CD8-positive, alpha-beta T cell (primary cell): ENCODE measurements at regions of chr22 and their contacts with region 1.

Region 1: DNA sequence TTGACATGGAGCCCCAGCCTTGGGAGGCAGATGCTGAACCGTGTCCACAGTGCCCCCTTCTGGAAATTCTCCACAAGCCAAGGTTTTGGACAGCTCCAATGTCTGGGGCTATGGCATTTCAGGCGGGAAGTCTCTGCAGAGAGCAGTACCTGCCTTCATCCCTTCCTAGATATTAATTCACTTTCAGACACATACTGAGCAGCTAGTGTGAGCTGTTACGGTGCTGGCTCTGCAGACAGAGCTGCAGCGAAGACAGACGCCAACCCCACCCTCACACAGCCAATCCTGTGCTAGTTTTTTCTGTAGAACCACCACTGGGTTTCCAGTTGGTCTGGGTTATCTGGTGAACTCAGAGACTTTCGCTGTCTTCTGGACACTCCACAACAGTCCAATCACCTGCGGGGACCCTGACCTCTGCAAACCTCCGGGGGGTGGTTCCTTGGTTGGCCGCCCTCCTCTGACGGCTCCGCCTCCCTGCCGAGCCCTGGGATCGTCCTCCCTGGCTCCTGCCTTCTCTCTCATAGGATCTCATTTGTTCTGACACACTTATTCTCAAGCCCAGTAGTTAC is 9.1 kb downstream of the LMF2 start:
- DNase-seq: peak; percentile 41 to 84 (median 76)
- ATAC-seq: peak; percentile 99
- H3K4me3 ChIP-seq: no peak overlapping the region
- H3K4me3 Mint-ChIP-seq: no peak overlapping the region
- H3K27ac ChIP-seq: no peak overlapping the region
- H3K27ac Mint-ChIP-seq: no peak overlapping the region
- H3K4me1 ChIP-seq: no peaks in the 10 kb centered on the region
- H3K4me1 Mint-ChIP-seq: no peaks in the 10 kb centered on the region
- H3K27me3 ChIP-seq: no peaks in the 10 kb centered on the region
- H3K27me3 Mint-ChIP-seq: no peaks in the 10 kb centered on the region
- CTCF ChIP-seq: peak; percentile 63

Region 2: DNA sequence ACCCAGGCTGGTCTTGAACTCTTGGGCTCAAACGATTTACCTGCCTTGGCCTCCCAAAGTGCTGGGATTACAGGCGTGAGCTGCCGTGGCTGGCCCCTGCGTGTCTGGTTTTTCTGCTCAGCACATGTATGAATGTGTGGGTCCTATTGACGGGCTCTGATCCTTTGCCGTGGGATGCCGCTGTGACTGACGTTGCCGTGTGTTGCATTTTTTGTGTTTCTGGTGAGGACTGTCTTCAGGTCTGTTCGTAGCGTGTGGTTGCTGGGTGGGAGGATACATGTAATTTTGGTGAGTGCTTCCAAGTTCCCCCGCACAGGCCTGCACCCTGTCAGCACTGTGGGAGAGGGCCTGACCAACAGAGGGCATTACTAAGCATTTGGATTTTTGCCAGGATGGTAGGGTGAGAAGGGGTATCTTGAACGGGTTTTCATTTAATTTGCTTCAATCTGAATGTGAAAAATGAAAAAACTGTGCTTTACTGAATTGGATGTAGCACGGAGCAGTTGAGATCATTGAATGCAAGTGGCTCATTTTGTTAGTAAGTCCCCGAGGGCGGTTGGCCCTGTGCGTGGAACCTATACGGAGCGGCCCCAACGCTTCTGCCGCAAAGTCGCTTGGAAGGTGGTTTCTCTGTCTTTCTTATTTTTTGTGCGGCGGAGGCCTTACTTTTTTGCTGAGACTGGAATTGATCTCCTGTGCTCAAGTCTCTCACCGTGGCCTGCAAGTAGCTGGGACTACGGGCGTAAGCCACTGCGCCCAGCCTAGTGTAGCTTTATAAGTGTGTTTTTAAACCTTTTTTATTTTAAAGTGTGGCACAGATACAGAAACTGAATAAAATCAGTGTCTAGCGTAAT is 636.5 kb before region 1 on chr22:
- CTCF ChIA-PET with region 1: no interaction called
- POLR2A ChIA-PET with region 1: no interaction called
- intact Hi-C with region 1: no loop called
- DNase-seq: no peak
- ATAC-seq: no peak
- H3K4me3 ChIP-seq: no peak overlapping the region
- H3K4me3 Mint-ChIP-seq: no peak overlapping the region
- H3K27ac ChIP-seq: no peak overlapping the region
- H3K27ac Mint-ChIP-seq: peak overlapping the region; percentile 45
- H3K4me1 ChIP-seq: peaks cover 21% of the 10 kb centered on the region
- H3K4me1 Mint-ChIP-seq: peaks cover 53% of the 10 kb centered on the region
- H3K27me3 ChIP-seq: no peaks in the 10 kb centered on the region
- H3K27me3 Mint-ChIP-seq: no peaks in the 10 kb centered on the region
- CTCF ChIP-seq: no peak

Region 3: GRCh38 chr22:50399751-50400331 is 98.6 kb before region 1 on chr22:
- CTCF ChIA-PET with region 1: interaction called, 15 read pairs
- POLR2A ChIA-PET with region 1: no interaction called
- intact Hi-C with region 1: loop called (anchors 1 kb)
- DNase-seq: peak in 5 of 9 experiments; percentile 6 to 56 (median 28)
- ATAC-seq: no peak
- H3K4me3 ChIP-seq: no peak overlapping the region
- H3K4me3 Mint-ChIP-seq: no peak overlapping the region
- H3K27ac ChIP-seq: peak overlapping the region in 1 of 2 experiments; percentile 75
- H3K27ac Mint-ChIP-seq: peak overlapping the region; percentile 78
- H3K4me1 ChIP-seq: peaks cover 12% of the 10 kb centered on the region
- H3K4me1 Mint-ChIP-seq: peaks cover 32% of the 10 kb centered on the region
- H3K27me3 ChIP-seq: no peaks in the 10 kb centered on the region
- H3K27me3 Mint-ChIP-seq: no peaks in the 10 kb centered on the region
- CTCF ChIP-seq: no peak

Region 4: GRCh38 chr22:50444663-50445062 is 53.7 kb before region 1 on chr22:
- CTCF ChIA-PET with region 1: interaction called, 9 read pairs
- POLR2A ChIA-PET with region 1: interaction called, 3 read pairs
- intact Hi-C with region 1: loop called in 1 of 2 experiments (anchors 5 kb)
- DNase-seq: peak in 1 of 9 experiments; percentile 4
- ATAC-seq: no peak
- H3K4me3 ChIP-seq: peak overlapping the region in 1 of 2 experiments; percentile 3
- H3K4me3 Mint-ChIP-seq: no peak overlapping the region
- H3K27ac ChIP-seq: peak overlapping the region; percentile 38 to 82
- H3K27ac Mint-ChIP-seq: peak overlapping the region; percentile 93
- H3K4me1 ChIP-seq: peaks cover 36% of the 10 kb centered on the region
- H3K4me1 Mint-ChIP-seq: peaks cover 29% of the 10 kb centered on the region
- H3K27me3 ChIP-seq: no peaks in the 10 kb centered on the region
- H3K27me3 Mint-ChIP-seq: no peaks in the 10 kb centered on the region
- CTCF ChIP-seq: no peak

Region 5: GRCh38 chr22:50456466-50457234 is 41.8 kb before region 1 on chr22:
- CTCF ChIA-PET with region 1: interaction called, 13 read pairs
- POLR2A ChIA-PET with region 1: no interaction called
- intact Hi-C with region 1: loop called in 1 of 2 experiments (anchors 1 kb)
- DNase-seq: no peak
- ATAC-seq: peak; percentile 58
- H3K4me3 ChIP-seq: no peak overlapping the region
- H3K4me3 Mint-ChIP-seq: no peak overlapping the region
- H3K27ac ChIP-seq: no peak overlapping the region
- H3K27ac Mint-ChIP-seq: peak overlapping the region; percentile 66
- H3K4me1 ChIP-seq: no peaks in the 10 kb centered on the region
- H3K4me1 Mint-ChIP-seq: peaks cover 3% of the 10 kb centered on the region
- H3K27me3 ChIP-seq: no peaks in the 10 kb centered on the region
- H3K27me3 Mint-ChIP-seq: no peaks in the 10 kb centered on the region
- CTCF ChIP-seq: no peak

Region 6: DNA sequence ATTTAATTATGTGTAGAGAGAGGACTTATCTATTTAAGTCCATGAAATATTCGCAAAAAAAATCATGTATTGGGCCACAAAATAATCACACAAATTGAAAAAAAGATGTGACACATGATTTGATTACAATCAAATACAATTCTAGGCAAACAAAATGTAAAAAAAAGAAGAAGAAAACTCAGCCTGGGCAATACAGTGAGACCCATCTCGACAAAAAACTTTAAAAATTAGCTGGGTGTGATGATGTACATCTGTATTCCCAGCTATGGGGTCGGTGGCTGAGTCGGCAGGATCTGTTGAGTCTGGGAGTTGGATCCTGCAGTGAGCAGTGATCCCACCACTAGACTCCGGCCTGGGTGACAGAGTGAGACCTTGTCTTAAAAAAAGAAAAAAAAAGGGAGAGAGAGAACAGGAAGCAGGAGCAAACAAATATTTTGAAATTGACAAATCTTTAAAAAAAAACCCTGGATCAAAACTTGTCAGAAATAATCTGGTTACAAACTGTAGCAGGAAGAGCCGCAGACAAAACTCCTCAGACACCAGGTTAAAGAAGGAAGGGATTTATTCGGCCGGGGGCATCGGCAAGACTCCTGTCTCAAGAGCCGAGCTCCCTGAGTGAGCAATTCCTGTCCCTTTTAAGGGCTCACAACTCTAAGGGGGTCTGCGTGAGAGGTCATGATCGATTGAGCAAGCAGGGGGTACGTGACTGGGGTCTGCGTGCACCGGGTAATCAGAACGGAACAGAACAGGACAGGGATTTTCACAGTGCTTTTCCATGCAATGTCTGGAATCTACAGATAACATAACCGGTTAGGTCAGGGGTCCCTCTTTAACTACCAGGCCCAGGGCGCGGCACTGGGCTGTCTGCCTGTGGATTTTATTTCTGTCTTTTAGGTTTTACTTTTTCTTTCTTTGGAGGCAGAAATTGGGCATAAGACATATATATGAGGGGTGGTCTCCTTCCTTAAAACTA is 34.7 kb after region 1 on chr22:
- CTCF ChIA-PET with region 1: no interaction called
- POLR2A ChIA-PET with region 1: no interaction called
- intact Hi-C with region 1: no loop called
- DNase-seq: no peak
- ATAC-seq: no peak
- H3K4me3 ChIP-seq: no peak overlapping the region
- H3K4me3 Mint-ChIP-seq: peak overlapping the region; percentile 77
- H3K27ac ChIP-seq: no peak overlapping the region
- H3K27ac Mint-ChIP-seq: no peak overlapping the region
- H3K4me1 ChIP-seq: peaks cover 19% of the 10 kb centered on the region
- H3K4me1 Mint-ChIP-seq: peaks cover 15% of the 10 kb centered on the region
- H3K27me3 ChIP-seq: peaks cover 0 to 2% of the 10 kb centered on the region in 2 experiments
- H3K27me3 Mint-ChIP-seq: peaks cover 8% of the 10 kb centered on the region
- CTCF ChIP-seq: no peak